ENCODE measurements at regions of chr4 and their contacts with region 1.

Region 1: DNA sequence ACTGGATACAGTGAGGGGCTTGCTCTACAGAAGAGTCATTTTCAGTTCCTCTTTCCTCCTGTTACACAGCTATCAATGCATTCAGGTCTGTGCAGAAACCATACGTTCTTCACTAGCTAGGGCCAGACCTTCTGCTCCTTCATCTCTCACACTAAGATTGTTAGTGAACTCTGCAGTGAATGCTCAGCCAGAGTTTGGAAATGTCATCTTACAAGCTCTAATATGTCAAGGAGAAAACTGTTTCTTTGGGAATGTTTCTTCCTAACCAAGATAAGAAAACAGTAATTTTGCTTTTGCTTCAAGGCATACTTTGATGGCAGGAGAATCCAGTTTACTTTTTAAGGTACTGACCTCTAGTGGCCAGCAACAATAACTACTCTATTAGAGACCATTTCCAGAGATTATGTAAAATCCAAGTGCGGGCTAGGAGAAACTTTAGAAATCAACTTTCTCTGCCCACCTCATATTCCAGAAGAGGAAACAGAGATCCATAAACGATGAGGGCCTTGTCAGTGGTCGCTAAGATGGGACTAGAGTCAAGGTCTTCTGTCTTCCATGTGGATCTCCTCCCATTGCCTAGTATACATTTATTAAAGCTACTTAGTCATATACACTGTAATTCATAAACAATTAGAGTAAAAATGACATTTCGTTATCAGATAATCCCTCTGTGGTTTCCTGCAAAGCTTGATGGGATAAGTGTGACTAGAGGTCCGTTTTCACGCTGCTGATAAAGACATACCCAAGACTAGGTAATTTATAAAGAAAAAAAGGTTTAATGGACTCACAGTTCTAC is 12.1 kb upstream of the CC2D2A start:
- DNase-seq: no peak
- ATAC-seq: peak; percentile 24 to 79 (median 73)
- H3K4me3 ChIP-seq: no peak overlapping the region
- H3K27ac ChIP-seq: peak overlapping the region in 7 of 12 donors; percentile 8 to 43 (median 21)
- H3K4me1 ChIP-seq: peaks cover 0 to 24% (median 6%) of the 10 kb centered on the region in 12 donors
- H3K27me3 ChIP-seq: no peaks in the 10 kb centered on the region
- CTCF ChIP-seq: peak; percentile 64 to 86 (median 76)
- POLR2A ChIP-seq: no peak

Region 2: GRCh38 chr4:14749910-14750309 is 707.7 kb before region 1 on chr4:
- intact Hi-C with region 1: loop called in 1 of 10 experiments (anchors 5 kb)
- DNase-seq: peak in 4 of 5 donors; percentile 36 to 54 (median 38)
- ATAC-seq: peak; percentile 61 to 94 (median 90)
- H3K4me3 ChIP-seq: no peak overlapping the region
- H3K27ac ChIP-seq: no peak overlapping the region
- H3K4me1 ChIP-seq: peaks cover 0 to 5% (median 0%) of the 10 kb centered on the region in 12 donors
- H3K27me3 ChIP-seq: no peaks in the 10 kb centered on the region
- CTCF ChIP-seq: peak; percentile 12 to 62 (median 50)
- POLR2A ChIP-seq: no peak

Region 3: GRCh38 chr4:15231265-15232091 is 226.1 kb before region 1 on chr4:
- intact Hi-C with region 1: loop called in 8 of 10 experiments (anchors 2 to 5 kb)
- DNase-seq: peak in 4 of 5 donors; percentile 65 to 83 (median 81)
- ATAC-seq: peak; percentile 84 to 85 (median 84)
- H3K4me3 ChIP-seq: no peak overlapping the region
- H3K27ac ChIP-seq: peak overlapping the region in 3 of 12 donors; percentile 21 to 67 (median 55)
- H3K4me1 ChIP-seq: peaks cover 0 to 43% (median 11%) of the 10 kb centered on the region in 12 donors
- H3K27me3 ChIP-seq: no peaks in the 10 kb centered on the region
- CTCF ChIP-seq: peak; percentile 57 to 85 (median 73)
- POLR2A ChIP-seq: no peak

Region 4: DNA sequence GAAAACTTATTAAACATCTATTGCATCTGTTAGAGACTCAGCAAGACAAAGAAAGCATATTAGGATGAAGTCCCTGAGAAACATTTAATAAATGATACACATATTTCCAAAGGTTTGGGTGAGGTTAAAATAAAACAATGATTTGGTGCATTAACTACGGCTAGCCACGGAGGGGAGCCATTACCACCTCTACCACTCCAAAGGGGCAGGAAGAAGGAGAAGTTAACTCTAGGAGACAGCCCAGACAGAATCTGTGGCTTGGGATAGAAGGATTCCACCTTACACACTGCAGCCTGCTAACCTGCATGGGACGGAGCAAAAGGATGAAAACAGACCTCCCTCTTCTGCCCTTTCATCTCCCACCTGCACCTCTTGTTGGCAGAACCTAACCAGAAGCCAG is 218.9 kb before region 1 on chr4:
- intact Hi-C with region 1: loop called in 9 of 10 experiments (anchors 1 to 5 kb)
- DNase-seq: peak in 2 of 5 donors; percentile 25 to 32
- ATAC-seq: peak; percentile 51 to 75 (median 58)
- H3K4me3 ChIP-seq: no peak overlapping the region
- H3K27ac ChIP-seq: no peak overlapping the region
- H3K4me1 ChIP-seq: peaks cover 0 to 37% (median 9%) of the 10 kb centered on the region in 12 donors
- H3K27me3 ChIP-seq: no peaks in the 10 kb centered on the region
- CTCF ChIP-seq: peak; percentile 36 to 68 (median 52)
- POLR2A ChIP-seq: no peak

Region 5: GRCh38 chr4:15344041-15344440 is 113.6 kb before region 1 on chr4:
- intact Hi-C with region 1: loop called in 1 of 10 experiments (anchors 10 kb)
- DNase-seq: no peak
- ATAC-seq: peak in 2 of 4 donors; percentile 37 to 83
- H3K4me3 ChIP-seq: no peak overlapping the region
- H3K27ac ChIP-seq: no peak overlapping the region
- H3K4me1 ChIP-seq: peaks cover 0 to 20% (median 0%) of the 10 kb centered on the region in 12 donors
- H3K27me3 ChIP-seq: no peaks in the 10 kb centered on the region
- CTCF ChIP-seq: no peak
- POLR2A ChIP-seq: no peak

Region 6: GRCh38 chr4:15396157-15396800 is 61.3 kb before region 1 on chr4:
- intact Hi-C with region 1: loop called in 2 of 10 experiments (anchors 5 to 10 kb)
- DNase-seq: peak in 2 of 5 donors; percentile 27 to 32
- ATAC-seq: peak in 3 of 4 donors; percentile 42 to 58 (median 54)
- H3K4me3 ChIP-seq: no peak overlapping the region
- H3K27ac ChIP-seq: no peak overlapping the region
- H3K4me1 ChIP-seq: peaks cover 0 to 22% (median 14%) of the 10 kb centered on the region in 12 donors
- H3K27me3 ChIP-seq: no peaks in the 10 kb centered on the region
- CTCF ChIP-seq: peak; percentile 47 to 71 (median 60)
- POLR2A ChIP-seq: no peak

Measured in heart left ventricle (tissue), 16 donors.